SK-N-SH (cell line): ENCODE measurements at regions of chr19 and their contacts with region 1.

Region 1: DNA sequence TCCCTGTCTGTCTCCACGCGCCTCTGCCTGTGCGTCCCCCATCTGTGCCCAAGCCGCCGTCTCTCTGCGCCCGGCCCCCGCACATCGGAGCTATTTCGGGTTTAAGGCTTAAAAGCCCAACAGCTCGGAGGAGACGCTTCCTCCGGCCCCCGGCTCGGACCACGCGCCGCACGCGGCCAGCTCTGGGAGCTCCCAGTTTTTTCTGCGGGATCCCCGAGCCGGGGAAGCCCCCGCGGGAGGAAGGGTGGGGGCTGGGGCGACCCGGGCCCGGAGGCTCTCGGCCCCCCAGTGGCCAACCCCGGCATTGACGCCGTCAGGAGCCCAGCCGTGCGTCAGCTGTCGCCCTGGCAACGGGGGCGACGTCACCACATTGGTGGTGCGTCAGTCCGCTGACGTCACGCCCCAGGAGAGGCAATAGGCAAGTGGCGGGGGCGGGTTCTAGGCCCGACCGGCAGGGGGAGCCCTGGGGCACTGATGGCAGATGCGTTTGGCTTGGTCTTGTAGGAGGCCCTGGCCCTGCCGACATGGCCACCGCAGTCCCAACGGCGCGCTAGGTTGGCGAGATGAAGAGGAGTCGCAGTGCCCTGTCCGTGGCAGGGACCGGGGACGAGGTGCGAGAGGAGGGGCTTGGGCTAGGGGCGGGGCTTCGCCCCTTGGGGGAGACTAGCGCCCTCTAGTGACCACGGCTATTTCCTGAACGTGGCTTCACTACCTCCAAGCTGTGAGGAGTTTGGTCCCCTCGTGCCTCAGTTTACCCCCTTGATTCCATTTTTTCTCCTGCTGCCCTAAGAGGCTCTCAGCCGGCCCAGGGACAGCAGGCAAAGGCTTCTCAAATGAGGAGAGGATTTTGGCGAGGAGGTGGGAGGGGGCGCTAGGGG is 3.7 kb upstream of the PDE4A start:
- DNase-seq: peak; percentile 99
- H3K4me3 ChIP-seq: peak overlapping the region; percentile 56 to 64
- H3K27ac ChIP-seq: no peak overlapping the region
- H3K4me1 ChIP-seq: peaks cover 5 to 10% of the 10 kb centered on the region in 2 experiments; a peak in 1 of 4 replicates
- H3K27me3 ChIP-seq: peaks cover 37% of the 10 kb centered on the region
- CTCF ChIP-seq: peak; percentile 84
- EP300 ChIP-seq: no peak
- RAD21 ChIP-seq: peak; percentile 21; the same call in 1 of the 2 replicates

Region 2: GRCh38 chr19:10403137-10404021 is 13.2 kb before region 1 on chr19 and contains the start of gene CDC37:
- CTCF ChIA-PET with region 1: interaction called, 313 read pairs
- POLR2A ChIA-PET with region 1: interaction called, 9 read pairs
- DNase-seq: peak; percentile 98
- H3K4me3 ChIP-seq: peak within 1 kb of the TSS; percentile 89 to 98
- H3K27ac ChIP-seq: peak within 1 kb of the TSS; percentile 75 to 80
- H3K4me1 ChIP-seq: peaks cover 9 to 15% of the 10 kb centered on the region in 2 experiments; a peak in 3 of 4 replicates
- H3K27me3 ChIP-seq: no peaks in the 10 kb centered on the region
- CTCF ChIP-seq: no peak
- EP300 ChIP-seq: no peak
- RAD21 ChIP-seq: no peak
- polyA plus RNA-seq, gene CDC37: 1,026 and 1,054 TPM in 2 replicates

Region 3: DNA sequence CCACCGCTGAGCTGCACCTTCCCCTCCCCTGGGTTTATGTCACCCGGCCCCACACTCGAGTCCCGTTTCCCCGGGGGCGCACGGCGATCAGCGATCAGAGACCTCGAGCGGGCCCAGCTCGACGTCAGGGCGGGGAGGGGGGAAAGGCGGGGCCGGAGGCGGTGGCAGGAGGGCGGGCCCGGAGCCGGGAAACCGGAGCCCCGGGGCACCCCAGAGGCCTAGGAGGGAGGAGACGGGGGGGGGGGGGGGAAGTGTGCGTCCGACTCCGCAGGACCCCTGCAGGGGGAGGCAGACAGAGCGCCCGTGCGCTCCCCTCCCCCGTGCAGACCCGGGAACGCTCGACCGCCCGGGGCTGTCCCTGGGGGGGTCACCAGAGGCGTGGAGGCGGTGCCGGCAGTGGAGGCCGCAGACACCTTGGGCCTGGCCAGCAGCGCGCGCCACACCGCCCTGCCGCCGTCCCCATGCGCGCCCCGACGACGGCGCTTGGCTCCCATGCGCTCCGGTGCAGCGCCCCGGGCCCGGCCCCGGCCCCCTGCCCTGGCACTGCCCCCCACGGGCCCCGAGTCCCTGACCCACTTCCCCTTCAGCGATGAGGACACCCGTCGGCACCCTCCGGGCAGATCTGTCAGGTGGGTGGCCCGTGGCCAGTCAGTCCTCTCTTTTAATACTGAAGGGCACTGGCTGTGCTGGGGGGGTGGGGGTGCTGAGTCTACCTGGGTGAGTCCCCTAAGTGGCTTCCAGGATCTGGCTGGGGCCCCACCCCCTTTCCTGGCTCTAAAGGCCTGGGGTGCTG is 15.5 kb after region 1 on chr19:
- CTCF ChIA-PET with region 1: interaction called, 127 read pairs
- POLR2A ChIA-PET with region 1: no interaction called
- DNase-seq: peak; percentile 68
- H3K4me3 ChIP-seq: peak overlapping the region; percentile 44 to 64; a peak in 3 of 4 replicates
- H3K27ac ChIP-seq: no peak overlapping the region
- H3K4me1 ChIP-seq: peaks cover 5 to 7% of the 10 kb centered on the region in 2 experiments; a peak in 2 of 4 replicates
- H3K27me3 ChIP-seq: no peaks in the 10 kb centered on the region
- CTCF ChIP-seq: no peak
- EP300 ChIP-seq: no peak
- RAD21 ChIP-seq: no peak

Region 4: GRCh38 chr19:10461047-10461790 is 44.6 kb after region 1 on chr19:
- CTCF ChIA-PET with region 1: interaction called, 10 read pairs
- POLR2A ChIA-PET with region 1: no interaction called
- DNase-seq: peak; percentile 99
- H3K4me3 ChIP-seq: peak overlapping the region; percentile 41 to 54
- H3K27ac ChIP-seq: no peak overlapping the region; a peak in 1 of 4 replicates
- H3K4me1 ChIP-seq: peaks cover 0 to 4% of the 10 kb centered on the region in 2 experiments; a peak in 1 of 4 replicates
- H3K27me3 ChIP-seq: no peaks in the 10 kb centered on the region
- CTCF ChIP-seq: no peak
- EP300 ChIP-seq: no peak
- RAD21 ChIP-seq: no peak